OCI-LY7 (cell line): ENCODE measurements at regions of chr6 and their contacts with region 1.

Region 1: GRCh38 chr6:71288228-71289001 is at the start of gene OGFRL1:
- DNase-seq: peak; percentile 92
- H3K4me3 ChIP-seq: peak within 1 kb of the TSS; percentile 82
- H3K27ac ChIP-seq: peak within 1 kb of the TSS; percentile 96
- H3K4me1 ChIP-seq: peaks cover 44% of the 10 kb centered on the region
- CTCF ChIP-seq: 0 out of 2 replicates have a peak, but pooled peaks have one; percentile 27
- total RNA-seq, gene OGFRL1: 32.5 and 33.5 TPM in 2 replicates

Region 2: GRCh38 chr6:70264306-70264705 is 1024.1 kb before region 1 on chr6:
- CTCF ChIA-PET with region 1: no interaction called
- POLR2A ChIA-PET with region 1: no interaction called
- intact Hi-C with region 1: no loop called
- DNase-seq: no peak
- H3K4me3 ChIP-seq: no peak overlapping the region
- H3K27ac ChIP-seq: no peak overlapping the region
- H3K4me1 ChIP-seq: no peaks in the 10 kb centered on the region
- CTCF ChIP-seq: no peak

Region 3: DNA sequence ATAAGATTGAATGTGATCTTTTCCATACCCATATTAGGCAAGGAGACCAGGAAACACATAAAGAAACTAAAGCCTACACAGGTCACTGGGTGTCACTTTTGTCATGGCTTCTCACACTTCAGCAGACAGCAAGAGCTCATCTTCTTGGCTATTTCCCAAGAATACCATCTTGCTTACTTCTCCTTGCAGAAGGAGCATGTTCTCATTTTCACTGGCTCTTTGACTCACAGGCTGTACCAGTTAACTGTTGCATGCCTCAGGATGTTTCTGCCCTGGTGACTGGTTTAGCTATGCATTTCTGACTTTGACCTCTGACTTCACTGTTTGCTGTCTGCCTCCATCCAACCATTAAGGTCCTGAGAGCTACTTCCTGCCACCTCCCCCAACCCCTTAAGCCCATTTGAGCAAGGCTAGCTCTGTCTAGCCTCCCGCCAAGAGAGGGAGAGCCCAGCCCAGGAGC is 40.1 kb before region 1 on chr6:
- CTCF ChIA-PET with region 1: interaction called, 8 read pairs
- POLR2A ChIA-PET with region 1: interaction called, 45 read pairs
- intact Hi-C with region 1: loop called (anchors 2 kb)
- DNase-seq: peak; percentile 83
- H3K4me3 ChIP-seq: peak overlapping the region; percentile 24
- H3K27ac ChIP-seq: peak overlapping the region; percentile 72
- H3K4me1 ChIP-seq: peaks cover 58% of the 10 kb centered on the region
- CTCF ChIP-seq: no peak

Region 4: GRCh38 chr6:71277926-71278600 is 10.4 kb before region 1 on chr6:
- CTCF ChIA-PET with region 1: no interaction called
- POLR2A ChIA-PET with region 1: no interaction called
- intact Hi-C with region 1: no loop called
- DNase-seq: no peak
- H3K4me3 ChIP-seq: no peak overlapping the region
- H3K27ac ChIP-seq: no peak overlapping the region
- H3K4me1 ChIP-seq: peaks cover 5% of the 10 kb centered on the region
- CTCF ChIP-seq: no peak

Region 5: GRCh38 chr6:71367756-71368155 is 79.3 kb after region 1 on chr6:
- CTCF ChIA-PET with region 1: interaction called, 3 read pairs
- POLR2A ChIA-PET with region 1: interaction called, 4 read pairs
- intact Hi-C with region 1: loop called (anchors 5 kb)
- DNase-seq: no peak
- H3K4me3 ChIP-seq: no peak overlapping the region
- H3K27ac ChIP-seq: no peak overlapping the region
- H3K4me1 ChIP-seq: peaks cover 28% of the 10 kb centered on the region
- CTCF ChIP-seq: no peak